Activated CD4-positive, alpha-beta memory T cell treated with anti-CD3 and anti-CD28 coated beads for 36 hours (primary cell): ENCODE measurements at regions of chr4 and their contacts with region 1.

Region 1: DNA sequence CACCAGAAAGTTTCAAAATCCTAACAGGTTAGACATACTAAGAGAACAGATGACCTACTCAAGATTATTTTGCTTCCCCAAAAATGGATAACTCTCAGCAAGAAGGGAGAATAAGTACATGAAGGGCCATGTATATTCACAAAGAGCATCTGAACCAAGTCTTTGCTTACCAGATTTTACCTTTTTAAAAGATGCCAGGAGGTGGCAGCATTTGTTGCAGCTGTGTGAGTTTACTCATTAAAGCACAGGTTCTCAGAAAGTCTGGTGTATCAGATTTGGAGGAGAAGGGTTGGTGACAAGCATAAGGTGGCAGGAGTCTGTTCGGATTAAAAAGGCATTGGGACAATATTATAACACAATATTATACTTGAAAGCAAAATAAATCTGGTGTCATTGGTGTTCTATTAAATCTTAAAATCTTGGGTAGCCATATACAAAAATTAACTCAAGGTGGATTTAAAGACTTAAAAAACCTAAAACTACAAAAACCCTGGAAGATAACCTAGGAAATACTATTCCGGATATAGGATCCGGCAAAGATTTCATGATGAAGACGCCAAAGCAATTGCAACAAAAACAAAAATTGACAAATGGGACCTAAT is 51.3 kb upstream of the NFKB1 start:
- DNase-seq: peak; percentile 61
- H3K4me3 Mint-ChIP-seq: no peak overlapping the region
- H3K27ac Mint-ChIP-seq: peak overlapping the region; percentile 4
- H3K4me1 Mint-ChIP-seq: peaks cover 43% of the 10 kb centered on the region
- H3K27me3 Mint-ChIP-seq: no peaks in the 10 kb centered on the region

Region 2: DNA sequence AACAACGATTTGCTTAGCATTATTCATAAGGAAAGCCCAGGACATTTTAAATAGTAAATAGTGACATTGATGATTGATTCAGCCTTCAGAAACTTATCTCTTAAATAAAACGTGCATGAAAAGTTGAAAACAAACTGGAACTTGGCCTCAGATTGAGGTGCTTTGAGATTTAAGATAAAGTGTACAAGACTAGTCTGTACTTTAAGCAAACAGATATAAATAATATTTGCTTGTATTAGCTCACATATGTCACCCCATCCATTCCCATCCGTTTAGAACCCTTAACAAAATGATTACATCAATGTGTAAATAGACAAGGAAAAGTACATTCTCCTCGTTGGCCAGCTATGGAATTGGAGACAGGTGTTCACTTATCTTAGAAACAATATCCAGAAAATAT is 528.5 kb before region 1 on chr4:
- CTCF ChIA-PET with region 1: no interaction called
- POLR2A ChIA-PET with region 1: no interaction called
- intact Hi-C with region 1: no loop called
- DNase-seq: no peak
- H3K4me3 Mint-ChIP-seq: no peak overlapping the region
- H3K27ac Mint-ChIP-seq: no peak overlapping the region
- H3K4me1 Mint-ChIP-seq: no peaks in the 10 kb centered on the region
- H3K27me3 Mint-ChIP-seq: no peaks in the 10 kb centered on the region

Region 3: DNA sequence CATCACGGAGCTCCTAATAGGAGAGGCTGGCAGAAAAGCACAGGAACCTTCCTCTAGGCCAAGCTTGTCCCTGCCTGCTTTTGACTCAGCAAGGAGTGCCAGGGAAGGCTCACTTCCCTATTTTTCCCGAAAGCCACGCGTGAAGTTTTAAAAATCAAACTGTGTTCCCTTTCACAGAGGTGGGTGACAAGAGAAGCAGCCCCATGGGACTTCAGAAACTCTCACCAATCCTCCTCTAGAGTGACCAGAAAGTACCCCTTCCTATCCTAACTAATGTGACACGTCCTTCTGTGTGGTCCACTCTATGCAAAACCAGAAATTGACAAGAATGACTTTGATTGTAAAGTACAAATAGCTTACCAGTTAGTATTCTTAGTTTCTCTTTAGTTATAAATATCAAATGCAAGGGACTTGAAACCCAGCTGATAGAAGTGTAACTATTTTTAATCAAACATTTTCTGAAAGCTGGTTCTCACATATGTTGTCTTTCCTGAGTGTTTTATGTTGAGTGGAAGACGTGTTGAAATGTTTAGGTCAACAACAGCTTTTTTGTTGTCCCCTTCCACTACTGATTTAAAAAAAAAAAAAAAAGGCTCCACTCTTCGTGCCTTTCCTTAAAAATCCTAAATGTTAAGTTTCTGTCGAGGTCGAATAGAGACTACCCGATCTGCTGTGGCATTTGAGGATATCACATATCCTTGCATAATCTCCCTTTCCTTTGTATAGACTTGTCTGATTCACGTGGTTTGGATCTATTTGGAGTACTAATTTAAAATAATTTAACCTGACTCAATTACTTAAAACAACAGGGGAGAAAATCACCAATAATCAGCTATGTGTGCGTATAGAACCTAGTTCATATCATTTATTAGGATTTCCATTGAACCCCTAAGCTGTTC is 93.4 kb after region 1 on chr4:
- CTCF ChIA-PET with region 1: interaction called, 4 read pairs
- POLR2A ChIA-PET with region 1: no interaction called
- intact Hi-C with region 1: loop called (anchors 5 kb)
- DNase-seq: no peak
- H3K4me3 Mint-ChIP-seq: no peak overlapping the region
- H3K27ac Mint-ChIP-seq: no peak overlapping the region
- H3K4me1 Mint-ChIP-seq: peaks cover 36% of the 10 kb centered on the region
- H3K27me3 Mint-ChIP-seq: no peaks in the 10 kb centered on the region

Region 4: DNA sequence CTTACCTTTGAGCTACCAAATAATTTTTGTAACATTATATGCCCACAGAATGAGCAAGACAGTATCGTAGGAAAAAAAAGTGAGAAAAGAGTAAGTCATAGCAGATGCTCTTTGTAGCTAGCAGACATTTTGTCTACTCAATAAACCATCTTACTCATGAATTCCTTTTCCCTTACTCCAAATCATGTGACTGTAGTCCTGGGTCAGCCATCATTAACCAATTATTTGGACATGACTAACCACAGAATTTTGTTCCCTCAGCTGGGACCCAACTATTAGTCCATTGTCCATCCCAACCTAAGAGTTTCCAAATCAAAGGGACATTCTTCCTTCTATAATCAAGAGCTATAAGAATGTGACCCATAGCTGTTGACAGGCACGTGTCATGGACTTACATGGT is 366.1 kb after region 1 on chr4:
- CTCF ChIA-PET with region 1: no interaction called
- POLR2A ChIA-PET with region 1: no interaction called
- intact Hi-C with region 1: loop called (anchors 5 kb)
- DNase-seq: no peak
- H3K4me3 Mint-ChIP-seq: no peak overlapping the region
- H3K27ac Mint-ChIP-seq: peak overlapping the region; percentile 82
- H3K4me1 Mint-ChIP-seq: peaks cover 86% of the 10 kb centered on the region
- H3K27me3 Mint-ChIP-seq: no peaks in the 10 kb centered on the region

Region 5: GRCh38 chr4:103008875-103009729 is 559.2 kb after region 1 on chr4:
- CTCF ChIA-PET with region 1: interaction called, 15 read pairs
- POLR2A ChIA-PET with region 1: interaction called, 3 read pairs
- intact Hi-C with region 1: loop called (anchors 1 kb)
- DNase-seq: no peak
- H3K4me3 Mint-ChIP-seq: no peak overlapping the region
- H3K27ac Mint-ChIP-seq: no peak overlapping the region
- H3K4me1 Mint-ChIP-seq: no peaks in the 10 kb centered on the region
- H3K27me3 Mint-ChIP-seq: no peaks in the 10 kb centered on the region